Dendritic cell treated with granulocyte-macrophage colony-stimulating factor and Interleukin-4, amounts not matched to agents 40 ng/mL and 50 ng/mL, for 4 days (primary cell): ENCODE measurements at regions of chr2 and their contacts with region 1.

Region 1: DNA sequence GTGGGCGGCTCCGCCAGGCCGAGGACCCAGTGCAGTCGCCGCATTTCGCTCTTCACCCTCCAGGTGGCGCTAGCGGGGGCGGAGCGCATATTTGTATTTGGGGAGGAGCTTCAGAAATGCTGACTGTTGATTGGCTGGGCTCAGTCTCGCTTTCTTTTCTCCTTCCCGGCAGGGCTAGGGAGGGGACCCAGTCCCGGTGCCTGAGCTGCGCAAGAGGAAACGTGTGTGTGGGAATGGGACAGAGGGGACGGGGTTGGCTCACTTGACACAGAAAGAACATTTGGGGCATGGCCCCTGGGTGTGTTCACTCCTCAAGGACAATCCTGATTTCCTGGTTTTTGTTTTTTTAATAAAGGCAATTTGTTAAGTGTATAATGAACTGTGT is 20.3 kb upstream of the DNMT3A start:
- H3K4me3 Mint-ChIP-seq: peak overlapping the region; percentile 70
- H3K27ac Mint-ChIP-seq: peak overlapping the region; percentile 87
- H3K4me1 Mint-ChIP-seq: peaks cover 35% of the 10 kb centered on the region
- H3K27me3 Mint-ChIP-seq: peaks cover 12% of the 10 kb centered on the region

Region 2: GRCh38 chr2:24907116-24907515 is 454.9 kb before region 1 on chr2:
- intact Hi-C with region 1: no loop called
- H3K4me3 Mint-ChIP-seq: no peak overlapping the region
- H3K27ac Mint-ChIP-seq: no peak overlapping the region
- H3K4me1 Mint-ChIP-seq: peaks cover 12% of the 10 kb centered on the region
- H3K27me3 Mint-ChIP-seq: no peaks in the 10 kb centered on the region

Region 3: DNA sequence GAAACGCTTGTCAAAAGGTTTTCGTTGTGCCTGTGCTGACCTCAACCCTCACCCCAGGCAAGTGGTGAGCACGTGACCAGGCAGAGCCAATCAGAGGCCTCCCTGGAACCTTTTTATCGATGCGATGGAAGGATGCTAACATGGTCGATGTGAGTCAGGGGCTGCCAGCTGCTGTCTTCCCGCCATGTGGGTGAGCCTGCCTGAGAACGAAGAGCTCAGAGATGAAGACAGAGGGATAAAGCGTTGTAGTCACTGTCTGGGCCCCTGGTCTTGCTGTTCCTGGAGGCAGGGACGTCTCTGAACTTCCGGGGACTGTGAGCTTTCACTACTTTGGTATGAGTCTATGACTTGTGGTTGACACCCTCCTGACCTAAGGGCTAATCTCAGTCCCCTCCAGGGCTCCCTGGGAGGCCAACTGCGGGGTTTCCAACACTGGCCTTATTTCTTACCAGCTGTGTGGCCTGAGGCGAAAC is 39.0 kb before region 1 on chr2:
- intact Hi-C with region 1: no loop called
- H3K4me3 Mint-ChIP-seq: no peak overlapping the region
- H3K27ac Mint-ChIP-seq: no peak overlapping the region
- H3K4me1 Mint-ChIP-seq: peaks cover 30% of the 10 kb centered on the region
- H3K27me3 Mint-ChIP-seq: no peaks in the 10 kb centered on the region

Region 4: GRCh38 chr2:25483601-25484266 is 121.7 kb after region 1 on chr2:
- intact Hi-C with region 1: loop called (anchors 1 kb)
- H3K4me3 Mint-ChIP-seq: no peak overlapping the region
- H3K27ac Mint-ChIP-seq: peak overlapping the region; percentile 69
- H3K4me1 Mint-ChIP-seq: peaks cover 23% of the 10 kb centered on the region
- H3K27me3 Mint-ChIP-seq: no peaks in the 10 kb centered on the region

Region 5: GRCh38 chr2:25558262-25558661 is 196.2 kb after region 1 on chr2:
- intact Hi-C with region 1: loop called (anchors 1 kb)
- H3K4me3 Mint-ChIP-seq: peak overlapping the region; percentile 68
- H3K27ac Mint-ChIP-seq: peak overlapping the region; percentile 96
- H3K4me1 Mint-ChIP-seq: peaks cover 64% of the 10 kb centered on the region
- H3K27me3 Mint-ChIP-seq: no peaks in the 10 kb centered on the region

Region 6: DNA sequence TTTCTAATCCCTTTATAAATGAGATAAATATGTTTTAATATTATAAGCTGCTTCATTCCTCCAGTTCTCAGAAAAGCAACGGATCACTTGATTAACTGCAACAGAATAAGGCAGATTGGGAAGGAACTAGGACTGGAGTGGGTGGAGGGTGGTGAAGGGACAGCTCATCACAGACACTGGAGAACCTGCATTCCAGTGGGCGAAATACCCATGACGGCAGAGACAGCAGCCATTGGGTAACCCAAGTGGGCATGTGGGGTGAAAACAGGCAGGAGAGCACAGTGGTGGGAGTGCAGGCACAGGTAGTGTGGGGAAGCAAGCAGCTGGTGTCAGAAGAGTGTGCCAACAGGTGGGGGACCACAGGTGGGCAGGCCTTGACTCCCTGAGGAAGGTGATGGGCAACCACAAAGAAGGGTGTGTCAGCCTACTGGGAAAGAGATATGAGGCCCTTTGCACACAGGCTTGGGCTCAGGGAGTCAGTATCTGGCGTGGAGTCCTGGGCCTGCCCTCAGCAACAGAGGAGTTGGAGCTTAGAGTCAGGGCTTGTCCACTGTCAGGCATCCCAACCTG is 1513.1 kb after region 1 on chr2:
- intact Hi-C with region 1: no loop called
- H3K4me3 Mint-ChIP-seq: no peak overlapping the region
- H3K27ac Mint-ChIP-seq: no peak overlapping the region
- H3K4me1 Mint-ChIP-seq: peaks cover 8% of the 10 kb centered on the region
- H3K27me3 Mint-ChIP-seq: peaks cover 7% of the 10 kb centered on the region